ENCODE measurements at regions of chr10 and their contacts with region 1.

Region 1: GRCh38 chr10:102225646-102226541 is at the start of gene ELOVL3:
- DNase-seq: peak; percentile 91 to 92
- H3K4me3 ChIP-seq: peak within 1 kb of the TSS; percentile 17 to 50 (median 26); a peak in 5 of 8 replicates
- H3K27ac ChIP-seq: no peak within 1 kb of the TSS
- H3K4me1 ChIP-seq: peaks cover 0 to 4% (median 0%) of the 10 kb centered on the region in 4 experiments; a peak in 3 of 7 replicates
- H3K27me3 ChIP-seq: peaks cover 28 to 55% (median 49%) of the 10 kb centered on the region in 4 experiments
- CTCF ChIP-seq: no peak
- EP300 ChIP-seq: peak in 1 of 2 experiments; percentile 6; a peak in 1 of 3 replicates
- POLR2A ChIP-seq: no peak
- RAD21 ChIP-seq: no peak
- total RNA-seq, gene ELOVL3: 0.31 TPM in 1 of 2 replicates, not detected in the other

Region 2: DNA sequence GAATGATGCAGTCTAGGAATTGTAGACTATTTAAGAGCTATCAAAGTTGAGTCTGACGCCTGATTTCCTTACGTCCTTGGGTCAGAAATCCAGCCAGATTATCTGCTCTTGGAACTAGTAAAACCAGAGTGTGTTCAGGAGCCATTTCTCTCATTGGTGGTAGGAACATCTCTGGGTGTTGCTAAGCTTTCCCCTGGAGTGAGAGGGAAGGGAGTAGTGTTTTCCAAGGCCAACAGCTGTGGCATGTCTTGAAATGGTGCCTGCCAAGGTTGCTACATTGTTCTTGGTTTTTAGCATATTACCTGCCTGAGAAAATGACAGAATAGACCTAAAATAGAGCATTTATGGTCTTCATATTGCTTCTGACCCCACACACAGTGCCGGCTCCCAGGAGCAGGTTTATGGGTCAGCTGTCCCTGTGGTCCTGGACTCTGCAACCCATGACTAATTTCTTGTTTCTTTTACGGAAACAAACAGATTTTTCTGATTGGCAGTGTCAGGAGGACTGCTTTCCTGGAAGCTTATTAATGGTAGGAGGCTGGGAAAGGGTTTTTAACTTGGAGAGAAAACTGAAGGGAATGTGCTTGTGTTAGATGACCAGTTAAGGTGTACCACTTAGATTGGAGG is 37.0 kb after region 1 on chr10:
- CTCF ChIA-PET with region 1: interaction called, 35 read pairs
- POLR2A ChIA-PET with region 1: no interaction called
- DNase-seq: no peak
- H3K4me3 ChIP-seq: no peak overlapping the region
- H3K27ac ChIP-seq: no peak overlapping the region
- H3K4me1 ChIP-seq: no peaks in the 10 kb centered on the region
- H3K27me3 ChIP-seq: no peaks in the 10 kb centered on the region
- CTCF ChIP-seq: no peak
- EP300 ChIP-seq: no peak
- POLR2A ChIP-seq: no peak
- RAD21 ChIP-seq: no peak

Region 3: GRCh38 chr10:102327002-102327401 is 101.1 kb after region 1 on chr10:
- CTCF ChIA-PET with region 1: interaction called, 33 read pairs
- POLR2A ChIA-PET with region 1: no interaction called
- DNase-seq: no peak
- H3K4me3 ChIP-seq: no peak overlapping the region
- H3K27ac ChIP-seq: no peak overlapping the region
- H3K4me1 ChIP-seq: peaks cover 0 to 2% (median 0%) of the 10 kb centered on the region in 4 experiments; a peak in 2 of 7 replicates
- H3K27me3 ChIP-seq: no peaks in the 10 kb centered on the region
- CTCF ChIP-seq: no peak
- EP300 ChIP-seq: no peak
- POLR2A ChIP-seq: no peak
- RAD21 ChIP-seq: no peak

Region 4: GRCh38 chr10:102368072-102368471 is 142.2 kb after region 1 on chr10:
- CTCF ChIA-PET with region 1: interaction called, 52 read pairs
- POLR2A ChIA-PET with region 1: no interaction called
- DNase-seq: no peak
- H3K4me3 ChIP-seq: no peak overlapping the region
- H3K27ac ChIP-seq: no peak overlapping the region
- H3K4me1 ChIP-seq: no peaks in the 10 kb centered on the region
- H3K27me3 ChIP-seq: no peaks in the 10 kb centered on the region
- CTCF ChIP-seq: no peak
- EP300 ChIP-seq: no peak
- POLR2A ChIP-seq: no peak
- RAD21 ChIP-seq: no peak

Region 5: DNA sequence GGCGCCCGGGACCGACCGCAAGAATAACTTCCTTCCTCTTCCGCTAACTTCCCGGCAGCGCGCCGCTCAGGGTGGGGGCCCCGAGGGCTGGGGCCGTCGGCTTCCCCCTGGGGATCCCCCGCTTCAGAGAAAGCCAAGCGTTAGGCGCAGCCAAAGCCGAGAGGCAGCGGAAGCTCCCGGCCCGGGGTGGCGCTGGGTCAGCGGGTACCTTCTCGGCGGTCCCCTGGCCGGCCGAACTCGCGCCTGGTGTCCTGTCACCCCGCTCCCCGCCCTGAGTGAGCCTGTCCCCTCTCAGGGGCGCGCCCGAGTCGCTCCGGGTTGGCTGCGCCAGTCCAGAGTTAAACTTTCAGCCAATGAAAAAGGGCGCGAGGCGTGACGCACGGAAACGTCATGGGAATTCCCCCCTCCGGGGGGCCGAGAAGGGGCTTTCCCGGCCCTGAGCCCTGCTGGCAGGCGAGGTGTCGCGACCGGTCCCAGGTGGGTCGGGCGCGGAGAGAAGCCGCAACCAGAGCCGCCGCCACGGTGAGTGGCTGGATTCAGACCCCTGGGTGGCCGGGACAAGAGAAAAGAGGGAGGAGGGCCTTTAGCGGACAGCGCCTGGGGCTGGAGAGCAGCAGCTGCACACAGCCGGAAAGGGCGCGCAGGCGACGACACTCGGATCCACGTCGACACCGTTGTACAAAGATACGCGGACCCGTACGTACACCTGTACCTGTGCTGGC is 168.3 kb after region 1 on chr10:
- CTCF ChIA-PET with region 1: interaction called, 184 read pairs
- POLR2A ChIA-PET with region 1: interaction called, 9 read pairs
- DNase-seq: peak; percentile 65 to 96
- H3K4me3 ChIP-seq: peak overlapping the region; percentile 29 to 69 (median 55)
- H3K27ac ChIP-seq: peak overlapping the region; percentile 69; the same call in 1 of the 2 replicates
- H3K4me1 ChIP-seq: peaks cover 0 to 17% (median 9%) of the 10 kb centered on the region in 4 experiments; a peak in 6 of 7 replicates
- H3K27me3 ChIP-seq: peaks cover 0 to 22% (median 20%) of the 10 kb centered on the region in 4 experiments; a peak in 6 of 7 replicates
- CTCF ChIP-seq: peak in 1 of 3 experiments; percentile 96; a peak in 2 of 4 replicates
- EP300 ChIP-seq: peak in 1 of 2 experiments; percentile 89; a peak in 1 of 3 replicates
- POLR2A ChIP-seq: no peak; a peak in 1 of 3 replicates
- RAD21 ChIP-seq: peak; percentile 69 to 81

Region 6: DNA sequence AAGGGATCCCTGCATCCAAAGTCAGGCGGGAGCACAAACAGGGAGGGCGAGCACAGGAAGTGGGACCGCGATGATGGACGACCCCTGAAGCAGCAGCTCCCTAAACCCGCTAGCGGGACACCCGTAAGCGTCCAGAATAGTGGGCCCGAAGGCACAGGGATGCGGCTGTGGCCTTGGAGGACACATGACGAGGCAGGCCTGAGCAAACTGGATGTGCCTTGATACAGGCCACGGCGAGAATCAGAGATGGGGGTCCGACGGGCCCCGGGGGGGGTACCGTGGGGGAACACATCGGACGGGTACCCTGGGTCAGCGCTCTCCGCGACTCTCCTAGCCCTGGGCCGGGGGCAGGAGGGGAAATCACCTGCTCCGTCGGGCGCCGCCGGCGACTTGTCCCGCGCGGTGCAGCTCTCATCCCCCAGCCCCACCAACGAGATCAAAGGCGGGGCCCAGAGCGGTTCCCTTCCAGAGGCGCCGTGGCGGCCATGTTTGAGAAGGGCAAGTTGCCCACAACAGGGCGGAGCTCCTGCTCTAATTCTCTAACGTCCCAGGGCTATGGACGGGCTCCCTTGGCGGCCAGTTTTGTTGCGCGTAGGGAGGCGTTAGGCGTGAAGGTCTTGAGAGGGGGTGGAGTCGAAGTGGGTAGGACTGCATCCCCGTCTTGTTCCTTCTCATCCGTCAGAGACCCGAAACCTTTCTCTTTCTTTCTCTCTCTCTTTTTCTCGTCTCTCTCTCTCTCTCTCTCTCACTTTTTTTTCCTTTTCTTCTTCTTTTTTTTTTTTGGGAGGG is 206.5 kb after region 1 on chr10 and contains the start of gene CUEDC2:
- CTCF ChIA-PET with region 1: no interaction called
- POLR2A ChIA-PET with region 1: no interaction called
- DNase-seq: peak; percentile 90 to 100
- H3K4me3 ChIP-seq: peak within 1 kb of the TSS; percentile 66 to 92 (median 84)
- H3K27ac ChIP-seq: peak within 1 kb of the TSS; percentile 72; the same call in 1 of the 2 replicates
- H3K4me1 ChIP-seq: peaks cover 0 to 18% (median 13%) of the 10 kb centered on the region in 4 experiments; a peak in 6 of 7 replicates
- H3K27me3 ChIP-seq: peaks cover 13 to 37% (median 34%) of the 10 kb centered on the region in 4 experiments
- CTCF ChIP-seq: no peak
- EP300 ChIP-seq: no peak
- POLR2A ChIP-seq: peak; percentile 34 to 84
- RAD21 ChIP-seq: peak in 1 of 2 experiments; percentile 5; a peak in 1 of 4 replicates
- total RNA-seq, gene CUEDC2: 41.7 and 43.6 TPM in 2 replicates

Measured in H1 (cell line).